ENCODE measurements at regions of chr5 and their contacts with region 1.

Region 1: GRCh38 chr5:43940562-43940961 is 337.6 kb downstream of the NNT start:
- DNase-seq: no peak
- ATAC-seq: no peak
- H3K4me3 ChIP-seq: no peak overlapping the region
- H3K27ac ChIP-seq: no peak overlapping the region
- H3K4me1 ChIP-seq: no peaks in the 10 kb centered on the region
- H3K27me3 ChIP-seq: no peaks in the 10 kb centered on the region
- CTCF ChIP-seq: no peak

Region 2: DNA sequence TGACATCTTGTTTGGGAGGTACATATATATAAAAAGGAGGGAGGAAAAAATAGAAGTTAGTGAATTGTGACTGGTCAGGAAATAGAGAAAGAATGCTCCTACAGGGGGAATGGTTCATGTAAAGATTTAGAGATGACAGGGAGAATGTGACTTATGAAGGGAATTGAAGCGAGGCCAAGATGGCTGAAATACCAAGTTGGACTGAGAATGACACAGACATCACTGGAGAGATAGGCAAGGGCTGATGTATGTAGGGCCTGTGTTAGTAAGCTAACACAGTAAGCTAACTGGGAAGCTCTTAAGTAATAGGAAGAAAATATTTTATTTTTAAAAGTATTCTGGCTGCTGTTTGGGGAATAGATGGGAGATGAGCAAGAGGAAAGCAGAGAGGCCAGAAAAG is 51.3 kb before region 1 on chr5:
- intact Hi-C with region 1: loop called in 1 of 10 experiments (anchors 2 kb)
- DNase-seq: no peak
- ATAC-seq: peak in 3 of 8 donors; percentile 46 to 79 (median 52)
- H3K4me3 ChIP-seq: no peak overlapping the region
- H3K27ac ChIP-seq: peak overlapping the region in 2 of 10 donors; percentile 4 to 33
- H3K4me1 ChIP-seq: peaks cover 0 to 4% (median 0%) of the 10 kb centered on the region in 9 donors
- H3K27me3 ChIP-seq: no peaks in the 10 kb centered on the region
- CTCF ChIP-seq: no peak

Measured in heart right ventricle (tissue), 16 donors.